ENCODE measurements at regions of chr10 and their contacts with region 1.

Region 1: DNA sequence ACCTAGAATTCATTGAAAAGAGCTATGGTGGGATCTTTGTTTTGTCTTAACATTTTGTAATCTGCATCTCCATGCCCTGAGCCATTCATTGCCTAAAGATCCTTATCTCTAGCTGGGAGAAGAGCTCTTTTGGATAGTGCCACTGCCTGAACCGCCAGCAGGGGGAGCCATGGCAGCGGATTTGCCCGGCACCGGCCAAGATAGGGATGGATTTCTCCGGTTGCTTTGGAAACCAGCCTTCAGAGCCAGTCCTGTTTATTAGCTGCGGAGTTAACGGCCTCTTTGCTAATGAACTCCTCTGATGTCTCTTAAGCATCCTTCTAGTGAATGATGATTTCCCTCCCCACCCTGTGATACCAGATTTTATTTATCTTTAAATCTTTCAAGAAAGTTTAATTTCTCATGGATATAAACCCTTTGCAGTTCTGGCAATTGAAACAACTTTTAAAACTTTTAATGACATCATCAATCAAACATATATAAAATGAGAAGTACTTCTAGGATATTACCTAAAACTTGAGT is 58.2 kb upstream of the LYZL2 start:
- DNase-seq: peak; percentile 53 to 80 (median 67)
- ATAC-seq: peak; percentile 84
- H3K4me3 ChIP-seq: no peak overlapping the region
- H3K4me3 Mint-ChIP-seq: no peak overlapping the region
- H3K27ac ChIP-seq: no peak overlapping the region
- H3K27ac Mint-ChIP-seq: peak overlapping the region in 1 of 9 donors; percentile 47
- H3K4me1 ChIP-seq: no peaks in the 10 kb centered on the region
- H3K4me1 Mint-ChIP-seq: peaks cover 0 to 39% (median 2%) of the 10 kb centered on the region in 7 donors
- H3K27me3 ChIP-seq: no peaks in the 10 kb centered on the region
- H3K27me3 Mint-ChIP-seq: peaks cover 11 to 38% (median 28%) of the 10 kb centered on the region in 5 donors

Region 2: DNA sequence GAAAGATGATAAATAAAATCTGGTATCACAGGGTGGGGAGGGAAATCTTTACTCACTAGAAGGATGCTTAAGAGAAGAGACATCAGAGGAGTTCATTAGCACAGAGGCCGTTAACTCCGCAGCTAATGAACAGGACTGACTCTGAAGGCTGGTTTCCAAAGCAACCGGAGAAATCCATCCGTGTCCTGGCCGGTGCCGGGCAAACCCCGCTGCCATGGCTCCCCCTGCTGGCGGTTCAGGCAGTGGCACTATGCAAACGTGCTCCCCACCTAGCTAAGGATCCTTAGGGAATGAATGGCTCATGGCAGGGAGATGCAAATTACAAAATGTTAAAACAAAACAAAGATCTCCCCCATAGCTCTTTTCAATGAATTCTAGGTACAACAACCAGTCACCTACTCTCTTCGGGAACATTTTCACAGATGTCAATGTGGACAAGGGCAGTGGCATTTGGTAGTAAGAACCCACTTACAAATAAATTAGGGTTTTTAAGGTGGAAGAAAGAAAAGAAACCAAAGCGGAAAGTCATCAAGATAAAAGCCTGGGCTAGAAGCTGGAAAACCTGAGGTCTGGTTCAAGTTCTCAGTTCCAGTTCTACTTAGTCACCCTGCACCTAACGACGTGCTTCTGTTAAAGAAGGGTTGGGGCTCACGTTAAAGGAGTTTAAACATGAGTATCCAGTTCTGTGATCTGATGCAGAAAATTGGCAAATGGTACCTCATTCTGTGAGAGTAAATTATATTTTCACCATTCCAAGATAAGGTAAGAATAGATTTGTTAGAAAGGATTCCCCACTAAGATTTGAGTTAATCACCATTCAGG is 1191.2 kb before region 1 on chr10:
- CTCF ChIA-PET with region 1: no interaction called
- POLR2A ChIA-PET with region 1: no interaction called
- intact Hi-C with region 1: loop called in 1 of 2 experiments (anchors 5 kb)
- DNase-seq: peak in 8 of 9 donors; percentile 12 to 77 (median 32)
- ATAC-seq: peak; percentile 83
- H3K4me3 ChIP-seq: no peak overlapping the region
- H3K4me3 Mint-ChIP-seq: no peak overlapping the region
- H3K27ac ChIP-seq: no peak overlapping the region
- H3K27ac Mint-ChIP-seq: no peak overlapping the region
- H3K4me1 ChIP-seq: no peaks in the 10 kb centered on the region
- H3K4me1 Mint-ChIP-seq: peaks cover 0 to 5% (median 0%) of the 10 kb centered on the region in 7 donors
- H3K27me3 ChIP-seq: no peaks in the 10 kb centered on the region
- H3K27me3 Mint-ChIP-seq: no peaks in the 10 kb centered on the region

Region 3: DNA sequence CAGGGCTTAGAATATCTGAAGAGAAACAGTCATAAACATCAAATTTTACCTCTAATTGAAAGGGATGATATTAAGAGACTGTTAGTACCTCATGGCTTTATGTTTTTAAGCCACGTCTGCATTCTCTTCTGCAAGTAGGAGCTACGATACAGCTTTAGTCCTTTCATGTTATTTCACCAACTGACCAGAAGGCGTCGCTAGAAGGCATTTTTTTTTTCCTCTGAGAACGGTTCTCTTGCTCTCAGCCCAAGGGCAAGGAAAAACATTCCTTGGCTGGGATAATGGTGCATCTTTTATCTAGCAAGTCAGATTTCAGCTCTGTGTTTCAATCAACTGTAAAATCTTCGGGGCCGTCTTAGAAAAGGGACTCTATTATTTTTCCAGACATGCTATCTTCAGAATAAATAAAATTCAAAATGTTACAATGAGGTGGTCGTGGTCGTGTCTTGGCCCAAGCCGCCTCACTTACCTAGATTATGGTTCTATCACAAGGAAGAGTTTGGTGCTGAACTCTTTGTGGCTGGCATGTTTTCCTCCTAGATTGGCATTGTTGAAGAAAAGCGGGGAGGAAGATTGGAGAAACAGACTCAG is 16.6 kb before region 1 on chr10:
- CTCF ChIA-PET with region 1: interaction called, 6 read pairs
- POLR2A ChIA-PET with region 1: no interaction called
- intact Hi-C with region 1: loop called in 1 of 2 experiments (anchors 1 kb)
- DNase-seq: peak in 6 of 9 donors; percentile 15 to 51 (median 40)
- ATAC-seq: peak; percentile 76
- H3K4me3 ChIP-seq: peak overlapping the region; percentile 40
- H3K4me3 Mint-ChIP-seq: peak overlapping the region in 9 of 10 donors; percentile 43 to 80 (median 74)
- H3K27ac ChIP-seq: no peak overlapping the region
- H3K27ac Mint-ChIP-seq: no peak overlapping the region
- H3K4me1 ChIP-seq: no peaks in the 10 kb centered on the region
- H3K4me1 Mint-ChIP-seq: peaks cover 0 to 13% (median 0%) of the 10 kb centered on the region in 7 donors
- H3K27me3 ChIP-seq: no peaks in the 10 kb centered on the region
- H3K27me3 Mint-ChIP-seq: peaks cover 0 to 23% (median 12%) of the 10 kb centered on the region in 5 donors

Region 4: GRCh38 chr10:30701451-30702173 is 13.9 kb after region 1 on chr10:
- CTCF ChIA-PET with region 1: interaction called, 14 read pairs
- POLR2A ChIA-PET with region 1: interaction called, 4 read pairs
- intact Hi-C with region 1: loop called (anchors 1 kb)
- DNase-seq: peak in 8 of 9 donors; percentile 68 to 81 (median 74)
- ATAC-seq: peak; percentile 80
- H3K4me3 ChIP-seq: peak overlapping the region; percentile 31
- H3K4me3 Mint-ChIP-seq: peak overlapping the region; percentile 68 to 98 (median 88)
- H3K27ac ChIP-seq: peak overlapping the region; percentile 86
- H3K27ac Mint-ChIP-seq: peak overlapping the region; percentile 88 to 98 (median 96)
- H3K4me1 ChIP-seq: peaks cover 63 to 74% of the 10 kb centered on the region in 2 donors
- H3K4me1 Mint-ChIP-seq: peaks cover 51 to 97% (median 88%) of the 10 kb centered on the region in 7 donors
- H3K27me3 ChIP-seq: no peaks in the 10 kb centered on the region
- H3K27me3 Mint-ChIP-seq: no peaks in the 10 kb centered on the region

Region 5: GRCh38 chr10:31490858-31491504 is 803.2 kb after region 1 on chr10:
- CTCF ChIA-PET with region 1: no interaction called
- POLR2A ChIA-PET with region 1: no interaction called
- intact Hi-C with region 1: loop called in 1 of 2 experiments (anchors 5 kb)
- DNase-seq: peak in 6 of 9 donors; percentile 30 to 50 (median 36)
- ATAC-seq: peak; percentile 72
- H3K4me3 ChIP-seq: no peak overlapping the region
- H3K4me3 Mint-ChIP-seq: no peak overlapping the region
- H3K27ac ChIP-seq: no peak overlapping the region
- H3K27ac Mint-ChIP-seq: peak overlapping the region in 1 of 9 donors; percentile 1
- H3K4me1 ChIP-seq: no peaks in the 10 kb centered on the region
- H3K4me1 Mint-ChIP-seq: peaks cover 0 to 12% (median 0%) of the 10 kb centered on the region in 7 donors
- H3K27me3 ChIP-seq: no peaks in the 10 kb centered on the region
- H3K27me3 Mint-ChIP-seq: no peaks in the 10 kb centered on the region

Region 6: GRCh38 chr10:31808258-31809218 is 1120.8 kb after region 1 on chr10:
- CTCF ChIA-PET with region 1: no interaction called
- POLR2A ChIA-PET with region 1: no interaction called
- intact Hi-C with region 1: loop called (anchors 1 kb)
- DNase-seq: peak in 8 of 9 donors; percentile 21 to 62 (median 48)
- ATAC-seq: peak; percentile 77
- H3K4me3 ChIP-seq: no peak overlapping the region
- H3K4me3 Mint-ChIP-seq: peak overlapping the region in 3 of 10 donors; percentile 51 to 78 (median 56)
- H3K27ac ChIP-seq: no peak overlapping the region
- H3K27ac Mint-ChIP-seq: peak overlapping the region in 8 of 9 donors; percentile 17 to 94 (median 71)
- H3K4me1 ChIP-seq: no peaks in the 10 kb centered on the region
- H3K4me1 Mint-ChIP-seq: peaks cover 2 to 11% (median 6%) of the 10 kb centered on the region in 7 donors
- H3K27me3 ChIP-seq: no peaks in the 10 kb centered on the region
- H3K27me3 Mint-ChIP-seq: no peaks in the 10 kb centered on the region

Measured in naive thymus-derived CD4-positive, alpha-beta T cell (primary cell).